CD4-positive, alpha-beta T cell (primary cell): ENCODE measurements at regions of chr5 and their contacts with region 1.

Region 1: DNA sequence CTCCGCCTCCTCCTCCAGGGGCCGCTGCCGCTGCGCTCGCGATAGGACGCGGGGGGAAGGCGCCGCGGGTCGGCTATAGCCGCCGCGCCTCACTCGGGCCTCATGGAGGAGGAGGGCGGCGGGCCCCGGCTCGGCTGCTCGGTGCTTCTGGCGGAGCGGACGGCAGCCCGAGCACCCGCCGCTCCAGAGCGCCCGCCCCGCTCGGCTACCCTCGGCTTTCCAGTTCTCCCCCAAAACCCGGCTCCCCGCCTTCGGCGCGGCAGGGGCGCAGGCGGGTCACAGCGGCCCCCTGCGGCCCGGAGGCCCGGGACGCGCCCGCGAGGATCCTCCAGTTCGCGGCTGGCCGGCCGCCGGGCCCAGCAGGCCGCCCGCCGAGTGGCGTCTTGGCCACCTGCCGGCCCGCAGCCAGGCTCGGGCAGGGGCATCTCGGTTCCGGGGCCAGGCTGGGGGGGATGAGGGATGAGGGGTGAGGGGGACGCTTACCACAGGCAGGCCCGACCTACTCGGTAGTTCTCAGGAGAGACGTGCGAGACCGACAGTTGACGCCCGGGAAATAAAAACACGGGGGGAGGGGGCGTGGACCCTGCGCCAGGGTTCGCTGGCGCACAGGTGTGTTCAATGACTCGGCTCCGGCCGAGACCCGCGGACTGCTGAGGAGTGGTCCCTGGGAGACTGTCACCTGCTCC is at the start of gene PAIP1:
- DNase-seq: peak; percentile 65 to 93 (median 78)
- ATAC-seq: peak; percentile 82
- H3K4me3 ChIP-seq: peak within 1 kb of the TSS; percentile 96
- H3K4me3 Mint-ChIP-seq: peak within 1 kb of the TSS; percentile 97
- H3K27ac ChIP-seq: peak within 1 kb of the TSS; percentile 85 to 89
- H3K27ac Mint-ChIP-seq: peak within 1 kb of the TSS; percentile 94
- H3K4me1 ChIP-seq: peaks cover 27% of the 10 kb centered on the region
- H3K4me1 Mint-ChIP-seq: peaks cover 6% of the 10 kb centered on the region
- H3K27me3 ChIP-seq: no peaks in the 10 kb centered on the region
- H3K27me3 Mint-ChIP-seq: peaks cover 11% of the 10 kb centered on the region
- CTCF ChIP-seq: peak; percentile 59
- total RNA-seq, gene PAIP1: 33.9 to 35.1 TPM

Region 2: DNA sequence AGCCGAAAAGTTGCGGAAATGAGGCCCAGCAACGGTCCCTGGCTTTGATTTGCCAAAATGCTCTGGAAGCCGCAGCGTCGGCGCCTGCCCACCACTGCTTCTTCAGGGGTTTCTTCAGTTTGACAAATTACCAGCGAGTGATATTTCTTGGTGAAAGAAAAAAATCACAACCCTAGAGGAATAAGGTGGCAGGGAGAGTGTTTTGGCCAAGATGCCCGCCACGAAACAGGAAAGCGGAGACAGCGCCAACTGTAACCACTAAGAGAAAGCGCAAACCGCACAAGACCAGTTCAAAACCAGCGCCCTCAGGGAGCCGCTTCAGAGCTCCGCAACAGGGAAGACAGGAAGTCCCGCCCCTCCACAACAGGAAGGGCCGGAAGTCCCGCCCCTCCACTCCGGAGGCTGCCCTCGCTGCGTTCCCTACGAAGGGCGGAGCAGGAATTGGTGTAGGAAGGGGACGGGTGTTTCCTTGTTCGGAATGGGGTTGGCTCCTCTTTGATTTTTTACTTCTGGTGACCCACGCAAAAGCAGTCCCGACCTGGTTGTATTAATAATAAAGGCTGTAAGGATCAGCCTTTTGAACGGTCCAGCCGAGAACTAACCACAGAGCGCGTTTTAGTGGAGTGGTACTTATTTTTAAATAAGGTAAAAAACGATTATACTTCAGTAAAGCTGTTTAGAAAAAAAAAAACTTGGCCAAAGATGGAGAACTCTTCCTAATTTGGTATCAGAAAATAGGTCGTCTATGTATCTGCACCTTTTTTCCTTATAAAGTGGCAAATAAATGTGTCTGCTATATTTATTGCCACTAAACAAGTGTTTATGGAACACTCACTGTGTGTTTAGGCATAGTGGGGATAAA is 42.0 kb before region 1 on chr5 and contains the start of gene C5orf34:
- CTCF ChIA-PET with region 1: interaction called, 3 read pairs
- POLR2A ChIA-PET with region 1: interaction called, 3 read pairs
- intact Hi-C with region 1: loop called (anchors 2 kb)
- DNase-seq: peak; percentile 88 to 98 (median 93)
- ATAC-seq: peak; percentile 87
- H3K4me3 ChIP-seq: peak within 1 kb of the TSS; percentile 63
- H3K4me3 Mint-ChIP-seq: peak within 1 kb of the TSS; percentile 92
- H3K27ac ChIP-seq: peak within 1 kb of the TSS; percentile 75 to 92
- H3K27ac Mint-ChIP-seq: peak within 1 kb of the TSS; percentile 92
- H3K4me1 ChIP-seq: peaks cover 10% of the 10 kb centered on the region
- H3K4me1 Mint-ChIP-seq: peaks cover 29% of the 10 kb centered on the region
- H3K27me3 ChIP-seq: no peaks in the 10 kb centered on the region
- H3K27me3 Mint-ChIP-seq: no peaks in the 10 kb centered on the region
- CTCF ChIP-seq: no peak
- total RNA-seq, gene C5orf34: 0.88 to 1.2 TPM

Region 3: DNA sequence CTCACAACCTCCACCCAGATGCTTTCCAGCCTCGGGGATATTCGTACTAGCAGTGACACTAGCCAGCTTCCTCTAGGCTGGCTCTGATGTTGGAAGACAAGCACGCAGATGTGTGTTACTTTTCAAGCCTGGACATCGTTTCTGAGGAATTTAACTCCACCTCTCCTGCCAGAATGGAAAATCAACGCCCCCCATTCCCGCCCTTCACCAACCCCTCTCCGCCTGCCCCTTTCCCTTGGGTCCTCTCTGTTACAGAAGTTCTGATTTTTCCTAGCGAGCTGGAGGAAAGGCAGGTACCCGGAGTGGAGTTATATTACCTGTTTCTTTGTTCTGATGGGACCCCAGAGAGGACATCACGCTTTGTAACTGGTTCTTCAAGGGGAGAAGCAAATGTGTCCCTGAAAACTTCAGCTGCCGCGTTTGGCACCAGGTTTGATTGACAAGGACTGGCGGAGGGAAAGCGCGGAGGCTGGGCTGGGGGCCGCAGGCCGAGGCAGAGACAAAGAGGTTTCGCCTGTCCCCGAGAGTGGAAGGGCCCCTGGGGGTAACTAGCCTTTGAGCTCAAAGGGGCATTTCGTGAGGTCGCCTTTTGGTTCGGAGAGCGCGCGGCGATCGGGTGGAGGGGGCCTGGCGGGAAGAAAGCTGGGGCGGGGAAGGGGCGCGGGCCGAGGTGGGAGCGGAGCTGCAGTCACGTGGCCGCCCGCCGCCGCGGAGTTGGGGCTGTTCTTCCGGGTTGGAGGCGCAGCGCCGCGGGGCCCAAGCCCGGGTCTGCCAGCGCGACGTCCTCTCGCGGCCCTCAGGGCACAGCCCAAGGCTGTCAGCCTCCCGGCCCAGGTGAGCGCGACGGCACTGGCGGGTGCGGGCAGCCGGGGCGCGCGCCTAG is 45.7 kb after region 1 on chr5 and contains the start of gene NNT:
- CTCF ChIA-PET with region 1: interaction called, 4 read pairs
- POLR2A ChIA-PET with region 1: interaction called, 20 read pairs
- intact Hi-C with region 1: loop called in 1 of 2 experiments (anchors 2 kb)
- DNase-seq: peak; percentile 55 to 89 (median 72)
- ATAC-seq: peak; percentile 78
- H3K4me3 ChIP-seq: peak within 1 kb of the TSS; percentile 98
- H3K4me3 Mint-ChIP-seq: peak within 1 kb of the TSS; percentile 93
- H3K27ac ChIP-seq: peak within 1 kb of the TSS; percentile 58 to 82
- H3K27ac Mint-ChIP-seq: peak within 1 kb of the TSS; percentile 87
- H3K4me1 ChIP-seq: peaks cover 31% of the 10 kb centered on the region
- H3K4me1 Mint-ChIP-seq: peaks cover 58% of the 10 kb centered on the region
- H3K27me3 ChIP-seq: no peaks in the 10 kb centered on the region
- H3K27me3 Mint-ChIP-seq: no peaks in the 10 kb centered on the region
- CTCF ChIP-seq: no peak
- total RNA-seq, gene NNT: 22.3 to 23.5 TPM

Region 4: GRCh38 chr5:43609752-43610151 is 52.8 kb after region 1 on chr5:
- CTCF ChIA-PET with region 1: interaction called, 4 read pairs
- POLR2A ChIA-PET with region 1: no interaction called
- intact Hi-C with region 1: loop called in 1 of 2 experiments (anchors 1 kb)
- DNase-seq: peak in 4 of 14 experiments; percentile 4 to 37 (median 25)
- ATAC-seq: peak; percentile 77
- H3K4me3 ChIP-seq: no peak overlapping the region
- H3K4me3 Mint-ChIP-seq: no peak overlapping the region
- H3K27ac ChIP-seq: no peak overlapping the region
- H3K27ac Mint-ChIP-seq: no peak overlapping the region
- H3K4me1 ChIP-seq: peaks cover 4% of the 10 kb centered on the region
- H3K4me1 Mint-ChIP-seq: peaks cover 45% of the 10 kb centered on the region
- H3K27me3 ChIP-seq: no peaks in the 10 kb centered on the region
- H3K27me3 Mint-ChIP-seq: no peaks in the 10 kb centered on the region
- CTCF ChIP-seq: no peak

Region 5: DNA sequence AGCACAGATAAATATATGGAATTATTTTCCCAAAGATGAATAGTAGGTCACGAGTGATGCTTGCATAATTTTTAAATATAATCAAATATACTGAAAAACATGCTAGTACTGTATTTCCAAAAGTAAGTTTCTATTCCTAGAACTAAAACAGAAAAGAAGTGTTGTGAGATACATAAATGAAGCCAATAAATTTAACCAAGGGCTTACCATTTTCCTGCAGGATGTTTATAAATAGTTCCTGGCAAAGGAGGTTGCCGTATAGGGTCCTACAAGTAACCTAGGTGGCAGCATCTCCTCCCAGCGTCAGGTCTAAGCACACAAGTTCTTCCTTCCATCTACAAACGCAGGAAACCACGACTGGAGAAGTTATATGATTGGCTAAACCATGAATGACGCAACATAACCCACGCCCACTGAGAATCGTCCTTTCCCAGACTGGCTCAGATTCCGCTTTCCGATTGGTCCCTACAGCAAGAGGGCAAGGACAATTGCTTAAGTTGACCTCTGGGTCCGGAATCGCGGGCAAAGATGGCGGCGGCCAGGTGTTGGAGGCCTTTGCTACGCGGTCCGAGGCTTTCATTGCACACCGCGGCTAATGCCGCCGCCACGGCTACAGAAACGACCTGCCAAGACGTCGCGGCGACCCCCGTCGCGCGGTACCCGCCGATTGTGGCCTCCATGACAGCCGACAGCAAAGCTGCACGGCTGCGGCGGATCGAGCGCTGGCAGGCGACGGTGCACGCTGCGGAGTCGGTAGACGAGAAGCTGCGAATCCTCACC is 1251.6 kb after region 1 on chr5 and contains the start of gene MRPS30:
- CTCF ChIA-PET with region 1: no interaction called
- POLR2A ChIA-PET with region 1: no interaction called
- intact Hi-C with region 1: loop called in 1 of 2 experiments (anchors 5 kb)
- DNase-seq: peak; percentile 74 to 97 (median 84)
- ATAC-seq: peak; percentile 94
- H3K4me3 ChIP-seq: peak within 1 kb of the TSS; percentile 85
- H3K4me3 Mint-ChIP-seq: peak within 1 kb of the TSS; percentile 95
- H3K27ac ChIP-seq: peak within 1 kb of the TSS; percentile 80 to 87
- H3K27ac Mint-ChIP-seq: peak within 1 kb of the TSS; percentile 97
- H3K4me1 ChIP-seq: peaks cover 11% of the 10 kb centered on the region
- H3K4me1 Mint-ChIP-seq: peaks cover 35% of the 10 kb centered on the region
- H3K27me3 ChIP-seq: no peaks in the 10 kb centered on the region
- H3K27me3 Mint-ChIP-seq: no peaks in the 10 kb centered on the region
- CTCF ChIP-seq: peak; percentile 50
- total RNA-seq, gene MRPS30: 43.2 to 43.8 TPM